Mammary epithelial cell (primary cell): ENCODE measurements at regions of chr2 and their contacts with region 1.

Region 1: DNA sequence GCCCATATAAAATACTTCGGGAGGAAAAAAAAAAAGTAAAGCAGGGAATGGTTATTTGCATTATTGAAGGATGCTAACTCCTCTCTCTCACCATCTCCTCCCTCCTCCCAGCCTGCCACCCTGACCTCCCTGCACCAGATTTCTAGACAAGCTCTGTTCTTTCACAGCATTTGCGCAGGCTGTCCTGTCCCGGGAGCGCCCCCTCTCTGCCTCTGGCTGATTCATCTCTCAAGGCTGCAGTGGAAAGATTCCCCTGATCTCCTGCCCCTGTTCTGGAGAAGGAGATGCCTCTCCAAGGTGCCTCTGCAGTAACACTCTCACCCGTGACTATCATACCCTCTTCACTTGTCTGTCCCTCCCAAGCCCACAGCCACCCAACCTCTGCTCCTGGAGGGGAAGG is 38.5 kb downstream of the COL4A4 start:
- DNase-seq: no peak
- H3K4me3 ChIP-seq: no peak overlapping the region
- H3K27ac ChIP-seq: no peak overlapping the region
- H3K4me1 ChIP-seq: no peaks in the 10 kb centered on the region
- H3K27me3 ChIP-seq: peaks cover 1% of the 10 kb centered on the region
- CTCF ChIP-seq: no peak

Region 2: GRCh38 chr2:227016894-227017293 is 108.6 kb before region 1 on chr2:
- CTCF ChIA-PET with region 1: no interaction called
- dilution Hi-C with region 1: no loop called
- in situ Hi-C with region 1: no loop called
- intact Hi-C with region 1: no loop called
- DNase-seq: peak; percentile 20
- H3K4me3 ChIP-seq: no peak overlapping the region
- H3K27ac ChIP-seq: no peak overlapping the region
- H3K4me1 ChIP-seq: no peaks in the 10 kb centered on the region
- H3K27me3 ChIP-seq: no peaks in the 10 kb centered on the region
- CTCF ChIP-seq: no peak

Region 3: DNA sequence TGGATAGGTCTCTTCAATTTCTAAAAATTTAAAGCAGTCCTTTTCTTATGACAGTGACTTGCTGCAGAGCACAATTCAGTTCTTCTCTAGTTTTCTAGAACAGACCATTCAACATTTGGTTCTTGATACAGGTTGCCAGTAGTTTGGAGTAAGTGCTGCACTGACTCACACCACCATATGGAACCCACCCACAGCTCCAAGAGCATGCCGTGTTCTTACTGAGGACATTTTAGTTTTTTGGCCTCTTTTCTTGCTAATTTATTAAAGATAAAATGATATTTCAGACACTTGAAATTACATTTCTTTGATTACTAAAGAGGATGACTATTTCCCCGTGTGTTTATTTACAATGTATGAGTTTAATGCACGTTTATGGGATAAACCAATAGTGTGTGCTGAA is 81.5 kb before region 1 on chr2:
- CTCF ChIA-PET with region 1: no interaction called
- dilution Hi-C with region 1: no loop called
- in situ Hi-C with region 1: no loop called
- intact Hi-C with region 1: no loop called
- DNase-seq: no peak
- H3K4me3 ChIP-seq: no peak overlapping the region
- H3K27ac ChIP-seq: no peak overlapping the region
- H3K4me1 ChIP-seq: no peaks in the 10 kb centered on the region
- H3K27me3 ChIP-seq: no peaks in the 10 kb centered on the region
- CTCF ChIP-seq: no peak

Region 4: DNA sequence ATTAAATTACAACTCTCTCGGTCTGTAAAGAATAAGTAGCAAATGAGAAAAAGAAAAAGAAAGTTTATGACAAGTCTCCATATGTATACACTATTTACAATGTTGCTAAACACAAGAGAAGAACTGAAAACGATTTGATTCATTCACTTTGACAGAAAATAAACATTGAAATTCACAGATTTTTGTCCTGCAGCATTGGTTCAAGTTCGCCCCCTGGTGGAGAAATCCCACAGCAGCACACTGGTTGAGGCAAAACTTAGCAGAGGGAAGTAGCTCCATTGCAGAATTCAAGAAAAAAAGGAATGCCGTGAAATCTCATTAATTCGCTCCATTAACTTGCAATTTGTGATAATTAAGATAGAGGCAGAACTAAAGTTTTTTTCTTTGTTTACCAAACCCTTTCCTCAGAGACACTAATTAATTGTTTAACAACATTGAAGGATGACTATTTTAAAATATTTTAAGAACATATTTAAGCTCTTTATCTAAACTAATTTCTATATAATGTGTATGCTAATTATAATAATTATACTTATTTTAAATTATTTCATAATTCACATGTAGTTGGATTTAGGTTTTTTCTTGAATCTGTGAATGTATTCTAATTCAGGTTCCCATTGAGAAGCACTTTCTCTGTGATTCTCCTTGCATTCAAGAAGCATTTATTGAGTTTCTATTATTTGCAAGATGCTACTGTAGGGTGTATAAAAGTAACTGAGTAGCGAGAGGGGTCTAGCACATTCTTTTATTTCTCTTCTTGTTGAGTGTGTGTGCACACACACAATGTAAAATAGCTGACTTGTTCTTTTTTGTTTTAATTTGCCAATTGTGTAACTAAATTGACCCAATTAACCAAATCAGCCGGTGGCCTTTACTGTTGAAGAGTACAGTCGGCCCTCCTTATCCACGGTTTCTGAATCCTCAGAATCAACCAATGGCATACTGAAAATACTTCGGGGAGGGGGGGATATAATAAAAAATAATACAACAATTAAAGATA is 113.0 kb after region 1 on chr2:
- CTCF ChIA-PET with region 1: no interaction called
- dilution Hi-C with region 1: no loop called
- in situ Hi-C with region 1: loop called (anchors 5 to 10 kb)
- intact Hi-C with region 1: loop called (anchors 1 kb)
- DNase-seq: peak; percentile 26
- H3K4me3 ChIP-seq: no peak overlapping the region
- H3K27ac ChIP-seq: no peak overlapping the region
- H3K4me1 ChIP-seq: no peaks in the 10 kb centered on the region
- H3K27me3 ChIP-seq: no peaks in the 10 kb centered on the region
- CTCF ChIP-seq: peak; percentile 96 to 99

Region 5: GRCh38 chr2:227608561-227609338 is 483.2 kb after region 1 on chr2:
- CTCF ChIA-PET with region 1: no interaction called
- dilution Hi-C with region 1: no loop called
- in situ Hi-C with region 1: no loop called
- intact Hi-C with region 1: no loop called
- DNase-seq: no peak
- H3K4me3 ChIP-seq: no peak overlapping the region
- H3K27ac ChIP-seq: no peak overlapping the region
- H3K4me1 ChIP-seq: no peaks in the 10 kb centered on the region
- H3K27me3 ChIP-seq: no peaks in the 10 kb centered on the region
- CTCF ChIP-seq: no peak

Region 6: DNA sequence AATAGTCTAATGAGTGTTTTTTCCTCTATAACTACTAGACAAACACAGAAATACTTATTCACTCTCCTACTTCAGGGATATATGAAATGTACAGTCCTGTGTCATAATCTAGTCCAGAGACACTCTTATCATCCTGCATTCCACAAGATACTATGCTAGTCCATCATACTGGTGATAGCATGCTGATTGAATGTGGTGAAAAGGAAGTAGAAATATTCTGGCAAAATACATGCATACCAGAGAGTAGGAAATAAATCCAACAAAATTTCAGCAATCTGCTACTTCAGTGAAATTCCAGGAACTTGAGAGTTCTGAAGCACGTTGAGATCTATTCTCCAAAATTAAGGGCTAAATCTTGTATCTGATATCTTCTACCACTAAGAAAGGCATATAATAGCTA is 1791.7 kb after region 1 on chr2:
- CTCF ChIA-PET with region 1: no interaction called
- dilution Hi-C with region 1: no loop called
- in situ Hi-C with region 1: no loop called
- intact Hi-C with region 1: no loop called
- DNase-seq: no peak
- H3K4me3 ChIP-seq: no peak overlapping the region
- H3K27ac ChIP-seq: no peak overlapping the region
- H3K4me1 ChIP-seq: no peaks in the 10 kb centered on the region
- H3K27me3 ChIP-seq: no peaks in the 10 kb centered on the region
- CTCF ChIP-seq: no peak